Psoas muscle (tissue), 8 donors: ENCODE measurements at regions of chr9 and their contacts with region 1.

Region 1: DNA sequence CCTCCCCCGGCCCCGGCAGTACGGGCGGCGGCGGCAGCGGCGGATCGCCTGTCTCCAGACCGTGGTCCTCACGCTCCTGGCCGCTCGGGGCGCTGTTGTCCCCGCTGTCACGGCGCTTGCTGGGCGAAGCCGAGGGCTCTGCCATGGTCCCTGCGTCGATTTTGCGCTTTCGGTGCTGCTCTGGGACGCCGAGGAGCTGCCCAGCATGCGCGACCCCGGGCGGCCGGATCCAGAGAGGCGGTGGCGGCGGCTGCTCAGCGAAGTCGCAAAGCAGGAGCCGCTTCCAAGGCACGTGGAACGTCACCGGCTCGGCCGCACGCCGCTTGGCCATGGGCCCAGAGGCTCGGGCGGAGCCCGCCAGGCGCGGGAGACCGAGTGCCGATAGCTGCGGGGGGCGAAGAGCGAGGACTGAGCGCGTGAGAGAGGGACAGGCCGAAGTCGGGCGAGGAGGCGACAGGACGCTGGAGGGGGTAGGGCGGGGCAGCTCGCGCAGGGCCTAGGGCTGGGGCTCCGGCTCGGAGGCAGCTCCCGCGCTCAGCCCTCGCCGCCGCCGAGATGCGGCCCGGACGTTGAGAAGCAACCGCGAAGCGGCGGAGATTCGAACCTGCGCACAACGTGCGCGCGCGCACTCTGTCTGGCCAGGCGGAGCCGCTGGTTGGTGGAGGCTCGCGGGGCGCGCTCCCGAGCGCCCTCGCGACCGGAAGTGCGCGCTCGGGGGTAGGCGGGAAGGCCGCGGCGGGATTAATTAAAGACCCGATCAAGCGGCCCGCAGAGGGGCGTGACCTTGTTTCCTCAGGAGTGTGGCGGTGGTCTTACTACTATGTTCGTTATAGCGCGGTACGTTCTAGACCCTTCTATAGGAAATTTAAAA is at the start of gene C9orf40:
- DNase-seq: peak; percentile 90 to 95
- ATAC-seq: peak; percentile 96 to 99 (median 98)
- H3K4me3 ChIP-seq: peak within 1 kb of the TSS; percentile 90
- H3K27ac ChIP-seq: peak within 1 kb of the TSS; percentile 93
- H3K4me1 ChIP-seq: peaks cover 14% of the 10 kb centered on the region
- H3K27me3 ChIP-seq: no peaks in the 10 kb centered on the region
- CTCF ChIP-seq: peak; percentile 80
- total RNA-seq, gene C9orf40: 1.9 to 4.6 (median 2.5) TPM

Region 2: DNA sequence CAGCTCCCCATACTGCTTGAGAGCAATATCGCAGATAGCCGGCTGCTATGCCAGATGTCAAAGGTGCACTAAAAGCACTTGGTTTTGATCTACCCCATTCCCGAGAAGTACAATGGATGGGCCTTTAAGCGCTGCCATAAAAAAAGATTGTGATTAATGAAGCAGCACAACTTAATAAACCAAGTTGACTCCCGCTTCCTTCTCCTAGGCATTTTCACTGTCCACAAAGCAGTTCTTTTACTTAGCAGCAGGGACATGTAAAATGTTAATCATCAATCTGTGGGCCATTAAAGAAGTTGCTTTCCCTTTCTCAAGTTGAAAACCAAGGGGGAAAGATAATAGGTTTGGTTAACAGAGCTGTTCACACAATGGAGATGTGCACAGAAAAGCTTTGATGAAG is 241.2 kb before region 1 on chr9:
- intact Hi-C with region 1: no loop called
- DNase-seq: no peak
- ATAC-seq: no peak
- H3K4me3 ChIP-seq: no peak overlapping the region
- H3K27ac ChIP-seq: no peak overlapping the region
- H3K4me1 ChIP-seq: no peaks in the 10 kb centered on the region
- H3K27me3 ChIP-seq: no peaks in the 10 kb centered on the region
- CTCF ChIP-seq: no peak

Region 3: GRCh38 chr9:74910036-74910435 is 42.5 kb before region 1 on chr9:
- intact Hi-C with region 1: no loop called
- DNase-seq: no peak
- ATAC-seq: no peak
- H3K4me3 ChIP-seq: no peak overlapping the region
- H3K27ac ChIP-seq: no peak overlapping the region
- H3K4me1 ChIP-seq: no peaks in the 10 kb centered on the region
- H3K27me3 ChIP-seq: no peaks in the 10 kb centered on the region
- CTCF ChIP-seq: no peak

Region 4: GRCh38 chr9:75001719-75002422 is 49.4 kb after region 1 on chr9:
- intact Hi-C with region 1: loop called in 1 of 2 experiments (anchors 5 kb)
- DNase-seq: no peak
- ATAC-seq: peak; percentile 67 to 92 (median 80)
- H3K4me3 ChIP-seq: no peak overlapping the region
- H3K27ac ChIP-seq: no peak overlapping the region
- H3K4me1 ChIP-seq: peaks cover 4% of the 10 kb centered on the region
- H3K27me3 ChIP-seq: no peaks in the 10 kb centered on the region
- CTCF ChIP-seq: peak; percentile 84

Region 5: DNA sequence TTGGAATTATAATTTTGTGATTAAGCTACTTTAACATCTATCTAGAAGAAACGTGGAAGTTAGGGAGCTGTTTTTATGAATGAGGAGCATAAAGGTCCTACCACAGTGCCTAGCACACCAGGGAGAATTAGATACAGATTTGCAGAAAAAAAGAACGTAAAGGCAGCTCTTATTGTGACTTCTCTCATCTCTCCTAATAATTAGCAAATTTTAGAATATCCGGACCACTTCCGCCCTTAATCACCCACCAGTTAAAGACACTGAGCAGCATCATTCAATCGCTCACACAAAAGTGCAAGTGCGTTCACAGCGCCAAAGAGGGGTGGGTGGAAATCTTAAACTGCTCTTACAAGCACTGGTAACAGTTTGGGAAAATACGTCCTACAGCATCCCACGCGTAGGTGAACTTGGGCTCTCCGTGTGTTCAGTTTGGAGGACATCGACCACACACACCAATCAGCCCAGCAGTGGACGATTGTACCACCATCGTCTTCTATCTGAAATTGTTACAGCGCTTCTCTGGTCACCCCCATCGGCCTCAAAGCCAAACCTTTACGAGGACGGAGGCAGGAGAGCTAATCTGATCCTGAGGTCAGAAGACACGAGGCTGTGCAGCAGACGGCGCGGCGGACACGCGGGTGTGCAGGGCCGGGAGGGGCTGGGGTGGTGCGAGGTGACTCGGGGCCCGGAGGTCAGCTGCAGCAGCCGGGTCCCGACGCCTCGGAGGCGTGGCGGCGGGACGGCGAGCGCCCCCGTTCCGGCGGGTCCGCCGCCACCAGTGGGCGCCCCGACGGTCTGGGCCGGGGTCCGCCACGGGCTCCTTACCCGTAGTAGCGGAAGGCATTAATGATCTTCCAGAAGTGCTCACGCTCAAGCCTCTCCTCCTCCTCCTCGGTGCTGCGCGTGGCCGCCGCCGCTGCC is 74.9 kb after region 1 on chr9:
- intact Hi-C with region 1: loop called in 1 of 2 experiments (anchors 2 kb)
- DNase-seq: peak; percentile 77 to 83
- ATAC-seq: peak; percentile 77 to 79 (median 79)
- H3K4me3 ChIP-seq: peak overlapping the region; percentile 98
- H3K27ac ChIP-seq: peak overlapping the region; percentile 97
- H3K4me1 ChIP-seq: peaks cover 19% of the 10 kb centered on the region
- H3K27me3 ChIP-seq: no peaks in the 10 kb centered on the region
- CTCF ChIP-seq: no peak

Region 6: DNA sequence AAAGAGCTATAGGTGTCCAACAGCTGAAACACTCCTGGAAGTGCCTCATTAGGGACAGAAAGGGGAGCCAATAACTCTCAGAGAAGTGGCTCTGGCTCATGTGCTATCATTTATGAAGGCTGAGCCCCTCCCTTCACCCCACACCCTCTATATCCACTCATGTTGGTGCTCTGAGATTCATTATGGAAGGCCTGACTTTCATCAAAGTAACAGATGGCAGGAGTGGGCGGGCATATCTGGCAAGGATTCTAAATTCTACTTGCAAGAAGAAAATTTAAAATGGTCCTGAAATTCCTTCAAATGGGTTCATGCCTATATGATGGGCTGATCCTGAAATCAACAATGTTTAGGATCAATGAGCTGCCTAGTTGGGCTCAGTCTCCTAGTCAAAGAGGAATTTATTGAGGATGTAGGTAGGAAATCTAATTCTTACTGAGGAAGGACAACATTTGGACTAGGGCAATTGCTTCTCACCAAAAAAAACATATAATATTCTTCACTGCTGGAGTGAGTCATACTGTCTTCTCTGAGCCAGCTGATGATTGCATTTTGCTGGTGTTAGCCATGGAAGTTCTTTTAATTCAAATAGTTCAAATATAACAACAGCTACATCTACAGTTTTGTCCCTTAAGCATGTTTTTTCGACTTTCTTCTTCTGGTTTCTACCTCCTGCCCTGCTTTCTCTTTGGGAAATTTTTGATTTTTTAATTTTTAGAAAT is 112.0 kb after region 1 on chr9:
- intact Hi-C with region 1: no loop called
- DNase-seq: no peak
- ATAC-seq: no peak
- H3K4me3 ChIP-seq: no peak overlapping the region
- H3K27ac ChIP-seq: peak overlapping the region; percentile 37
- H3K4me1 ChIP-seq: no peaks in the 10 kb centered on the region
- H3K27me3 ChIP-seq: no peaks in the 10 kb centered on the region
- CTCF ChIP-seq: no peak

Region 7: GRCh38 chr9:75083188-75083970 is 130.9 kb after region 1 on chr9:
- intact Hi-C with region 1: loop called (anchors 5 kb)
- DNase-seq: no peak
- ATAC-seq: peak; percentile 35 to 62 (median 48)
- H3K4me3 ChIP-seq: peak overlapping the region; percentile 8
- H3K27ac ChIP-seq: peak overlapping the region; percentile 80
- H3K4me1 ChIP-seq: peaks cover 23% of the 10 kb centered on the region
- H3K27me3 ChIP-seq: no peaks in the 10 kb centered on the region
- CTCF ChIP-seq: no peak

Region 8: GRCh38 chr9:75088260-75088905 is 135.9 kb after region 1 on chr9 and contains the start of gene OSTF1:
- intact Hi-C with region 1: loop called (anchors 5 kb)
- DNase-seq: peak; percentile 97 to 98
- ATAC-seq: peak; percentile 92 to 96 (median 94)
- H3K4me3 ChIP-seq: peak within 1 kb of the TSS; percentile 90
- H3K27ac ChIP-seq: peak within 1 kb of the TSS; percentile 96
- H3K4me1 ChIP-seq: peaks cover 25% of the 10 kb centered on the region
- H3K27me3 ChIP-seq: no peaks in the 10 kb centered on the region
- CTCF ChIP-seq: no peak
- total RNA-seq, gene OSTF1: 7.1 to 11.0 (median 9.7) TPM